ENCODE measurements at regions of chr1 and their contacts with region 1.

Region 1: DNA sequence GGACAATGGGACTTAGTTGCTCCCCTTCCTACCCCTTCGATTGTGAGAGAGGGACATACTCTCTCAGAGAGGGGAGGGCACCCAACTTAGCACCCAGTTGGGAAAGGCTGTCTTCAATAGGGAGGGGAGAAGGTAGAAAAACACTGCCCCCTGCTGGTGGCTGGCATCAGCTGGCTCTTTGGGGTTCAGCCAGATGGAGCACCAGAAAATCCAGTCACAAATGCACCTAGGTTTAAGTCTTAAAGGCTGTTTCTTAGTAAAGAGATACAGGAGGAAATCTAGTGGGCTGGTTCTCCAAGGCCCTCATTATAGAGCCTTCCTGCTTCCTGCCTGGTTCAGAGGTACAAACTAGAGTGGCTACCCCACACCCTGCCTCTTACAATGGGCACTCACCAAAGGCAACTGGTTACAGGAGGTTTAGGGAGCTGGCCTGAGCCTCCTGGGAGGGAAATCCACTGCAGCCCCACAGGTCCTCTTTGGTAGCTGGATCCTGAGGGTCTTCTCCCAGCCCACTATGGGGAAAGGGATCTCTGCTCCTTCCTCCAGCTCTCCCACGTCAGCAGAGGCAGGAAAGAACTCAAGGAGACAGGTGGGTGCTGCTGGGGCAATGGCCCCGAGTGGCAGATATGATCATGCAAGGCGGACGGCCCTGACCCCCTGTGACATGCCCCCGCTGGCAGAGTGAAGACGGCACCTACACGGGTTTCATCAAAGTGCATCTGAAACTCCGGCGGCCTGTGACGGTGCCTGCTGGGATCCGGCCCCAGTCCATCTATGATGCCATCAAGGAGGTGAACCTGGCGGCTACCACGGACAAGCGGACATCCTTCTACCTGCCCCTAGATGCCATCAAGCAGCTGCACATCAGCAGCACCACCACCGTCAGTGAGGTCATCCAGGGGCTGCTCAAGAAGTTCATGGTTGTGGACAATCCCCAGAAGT is 28.3 kb downstream of the EIF2D start:
- H3K4me3 Mint-ChIP-seq: peak overlapping the region; percentile 59
- H3K27ac Mint-ChIP-seq: peak overlapping the region; percentile 88
- H3K4me1 Mint-ChIP-seq: peaks cover 53% of the 10 kb centered on the region
- H3K27me3 Mint-ChIP-seq: no peaks in the 10 kb centered on the region

Region 2: DNA sequence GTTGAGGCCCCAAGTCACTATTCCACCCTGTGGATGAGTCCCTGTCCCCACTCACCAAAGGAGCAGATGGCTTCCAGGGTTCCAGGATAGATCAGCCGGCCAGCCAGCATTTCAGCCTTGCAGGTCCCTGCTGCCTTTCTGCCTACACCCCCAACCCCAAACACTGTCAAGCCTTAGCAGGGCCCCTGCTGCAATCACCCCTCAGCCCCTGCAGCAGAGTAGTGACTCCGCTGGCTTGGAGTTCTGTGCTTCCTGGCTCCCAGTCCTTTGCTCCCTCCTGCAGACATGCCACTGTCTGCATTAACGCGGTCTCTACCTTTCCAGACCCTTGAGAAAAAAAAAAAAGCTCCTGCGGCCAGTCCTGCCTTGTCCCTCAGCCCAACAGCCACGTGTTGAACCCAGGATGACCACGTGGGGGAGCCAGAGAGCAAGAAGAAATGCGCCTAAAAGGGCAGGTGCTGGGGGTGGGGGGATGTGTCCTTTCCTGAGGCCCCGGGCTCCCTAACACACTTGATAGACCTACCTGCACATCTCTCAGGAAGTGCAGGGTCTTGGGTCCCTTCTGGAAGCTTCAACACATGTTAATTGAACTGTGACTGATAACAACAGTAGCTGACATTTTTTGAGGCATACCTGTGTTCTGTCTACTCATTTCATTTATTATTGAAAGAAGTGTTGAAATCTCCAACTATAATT is 39.3 kb before region 1 on chr1:
- intact Hi-C with region 1: loop called (anchors 1 kb)
- H3K4me3 Mint-ChIP-seq: no peak overlapping the region
- H3K27ac Mint-ChIP-seq: peak overlapping the region; percentile 55
- H3K4me1 Mint-ChIP-seq: peaks cover 5% of the 10 kb centered on the region
- H3K27me3 Mint-ChIP-seq: peaks cover 5% of the 10 kb centered on the region

Region 3: GRCh38 chr1:206985162-206985749 is 401.3 kb after region 1 on chr1:
- intact Hi-C with region 1: no loop called
- H3K4me3 Mint-ChIP-seq: no peak overlapping the region
- H3K27ac Mint-ChIP-seq: no peak overlapping the region
- H3K4me1 Mint-ChIP-seq: peaks cover 5% of the 10 kb centered on the region
- H3K27me3 Mint-ChIP-seq: peaks cover 24% of the 10 kb centered on the region

Measured in dendritic cell treated with granulocyte-macrophage colony-stimulating factor and Interleukin-4, amounts not matched to agents 40 ng/mL and 50 ng/mL, for 4 days (primary cell).